ENCODE measurements at regions of chr12 and their contacts with region 1.

Region 1: GRCh38 chr12:51521554-51522276 is 69.3 kb upstream of the SCN8A start:
- DNase-seq: no peak
- ATAC-seq: 0 out of 2 replicates have a peak, but pooled peaks have one; percentile 34
- H3K4me3 ChIP-seq: no peak overlapping the region
- H3K27ac ChIP-seq: no peak overlapping the region
- H3K4me1 ChIP-seq: no peaks in the 10 kb centered on the region
- H3K27me3 ChIP-seq: no peaks in the 10 kb centered on the region
- CTCF ChIP-seq: peak; percentile 43; the same call in 1 of the 2 replicates

Region 2: DNA sequence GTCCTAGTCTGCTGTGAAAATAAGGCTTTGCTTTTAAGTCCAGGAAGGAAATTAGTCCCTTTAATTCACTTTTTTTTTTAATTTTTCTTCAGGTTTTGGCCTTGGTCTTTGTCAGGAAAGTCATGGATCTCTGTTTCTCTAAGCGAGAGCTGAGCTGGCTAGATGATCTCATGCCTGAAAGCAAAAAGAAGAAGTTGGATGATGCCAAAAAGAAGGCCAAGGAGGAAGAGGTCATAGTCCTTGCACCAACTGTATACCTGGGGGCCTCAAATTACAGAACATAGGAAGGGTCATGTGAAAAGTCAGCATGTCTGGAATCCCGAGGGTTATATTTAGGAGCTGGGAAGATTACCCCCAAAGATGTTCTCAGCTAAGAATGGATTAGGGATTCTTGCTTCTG is 24.8 kb before region 1 on chr12:
- CTCF ChIA-PET with region 1: no interaction called
- POLR2A ChIA-PET with region 1: no interaction called
- in situ Hi-C with region 1: no loop called
- intact Hi-C with region 1: no loop called
- DNase-seq: no peak
- ATAC-seq: no peak
- H3K4me3 ChIP-seq: no peak overlapping the region
- H3K27ac ChIP-seq: no peak overlapping the region
- H3K4me1 ChIP-seq: no peaks in the 10 kb centered on the region
- H3K27me3 ChIP-seq: no peaks in the 10 kb centered on the region
- CTCF ChIP-seq: no peak

Region 3: GRCh38 chr12:51549637-51550036 is 27.9 kb after region 1 on chr12:
- CTCF ChIA-PET with region 1: no interaction called
- POLR2A ChIA-PET with region 1: no interaction called
- in situ Hi-C with region 1: no loop called
- intact Hi-C with region 1: loop called (anchors 1 kb)
- DNase-seq: no peak
- ATAC-seq: no peak
- H3K4me3 ChIP-seq: no peak overlapping the region
- H3K27ac ChIP-seq: no peak overlapping the region
- H3K4me1 ChIP-seq: no peaks in the 10 kb centered on the region
- H3K27me3 ChIP-seq: peaks cover 9% of the 10 kb centered on the region; the same call in 1 of the 2 replicates
- CTCF ChIP-seq: no peak

Measured in Panc1 (cell line).